ENCODE measurements at regions of chr11 and their contacts with region 1.

Region 1: DNA sequence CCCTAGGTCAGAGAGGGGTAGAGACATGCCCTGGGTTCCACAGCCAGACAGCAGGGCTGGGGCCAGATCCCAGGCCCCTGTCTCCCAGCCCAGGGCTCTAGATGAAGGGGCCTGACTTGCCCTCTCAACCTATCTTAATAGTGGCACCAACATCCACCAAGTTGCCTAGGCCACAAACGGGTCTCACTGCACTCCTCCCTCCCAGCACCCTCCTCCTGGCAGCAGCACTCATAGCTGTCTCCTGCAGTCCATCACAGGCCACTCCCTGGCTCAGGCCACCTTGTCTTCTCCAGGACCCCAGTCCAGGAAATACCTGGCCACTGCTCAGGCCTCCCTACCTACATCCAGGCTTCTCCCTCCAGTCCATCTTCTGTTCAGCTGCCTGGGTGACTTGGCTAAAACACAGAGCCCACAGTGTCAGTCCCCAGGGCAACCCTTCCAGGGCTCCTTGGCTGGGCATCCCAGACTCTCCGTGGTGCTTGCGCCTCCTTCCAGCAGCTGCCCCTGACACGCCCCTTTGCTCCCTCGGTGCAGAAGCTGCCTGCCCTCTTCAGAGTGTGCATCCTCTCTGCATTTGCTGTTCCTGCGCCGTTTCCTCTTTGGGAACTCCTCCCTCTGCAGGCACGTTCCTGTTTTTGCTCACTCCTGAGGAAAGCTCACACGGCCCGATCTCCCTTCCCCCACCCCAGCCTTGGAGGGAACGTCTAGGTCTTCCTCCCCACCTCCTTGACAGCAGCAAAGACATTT is 40.5 kb downstream of the LRRC32 start:
- H3K4me3 Mint-ChIP-seq: peak overlapping the region; percentile 66
- H3K27ac Mint-ChIP-seq: peak overlapping the region; percentile 98
- H3K4me1 Mint-ChIP-seq: peaks cover 54% of the 10 kb centered on the region
- H3K27me3 Mint-ChIP-seq: peaks cover 12% of the 10 kb centered on the region

Region 2: GRCh38 chr11:76588455-76589325 is 41.3 kb before region 1 on chr11:
- intact Hi-C with region 1: loop called (anchors 5 kb)
- H3K4me3 Mint-ChIP-seq: no peak overlapping the region
- H3K27ac Mint-ChIP-seq: peak overlapping the region; percentile 89
- H3K4me1 Mint-ChIP-seq: peaks cover 35% of the 10 kb centered on the region
- H3K27me3 Mint-ChIP-seq: peaks cover 14% of the 10 kb centered on the region

Region 3: DNA sequence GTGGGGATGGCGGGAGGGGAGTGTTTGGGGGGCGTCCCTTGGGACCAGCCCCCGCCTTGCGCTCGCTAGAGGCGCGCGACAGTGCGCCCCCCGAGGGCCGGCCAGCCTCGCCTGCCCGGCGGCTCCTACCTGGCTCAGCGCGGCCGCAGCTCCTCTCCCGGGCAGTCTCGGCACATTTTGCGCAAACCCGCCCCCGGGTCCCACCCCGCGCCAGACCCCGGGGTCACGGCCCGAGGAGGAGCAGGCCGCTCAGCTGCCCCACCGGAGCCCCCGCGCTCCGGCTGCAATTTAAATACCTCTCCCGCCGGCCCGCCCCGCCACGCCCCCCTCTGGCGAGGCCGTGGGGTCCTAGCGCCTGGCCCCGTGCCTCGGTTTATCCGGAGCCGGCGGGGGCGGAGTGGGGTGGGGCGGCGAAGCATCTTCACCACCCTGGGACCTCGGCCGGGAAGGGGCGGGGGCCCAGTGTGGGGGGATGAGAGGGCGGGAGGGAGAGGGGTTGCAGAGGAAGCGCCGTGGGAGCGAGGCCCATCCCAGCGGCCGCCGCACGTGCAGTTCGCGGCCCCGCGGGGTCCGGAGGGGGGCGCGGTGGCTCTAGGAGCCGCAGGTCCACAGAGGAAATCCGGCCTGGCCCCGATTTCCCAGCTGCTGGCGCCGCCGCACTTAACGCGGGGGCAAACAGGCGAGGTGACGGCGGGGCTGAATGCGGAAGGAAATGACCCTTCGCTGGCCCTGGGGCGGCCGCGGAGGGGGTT is 40.6 kb after region 1 on chr11 and contains the start of gene LRRC32:
- intact Hi-C with region 1: loop called (anchors 2 kb)
- H3K4me3 Mint-ChIP-seq: peak within 1 kb of the TSS; percentile 55
- H3K27ac Mint-ChIP-seq: no peak within 1 kb of the TSS
- H3K4me1 Mint-ChIP-seq: peaks cover 32% of the 10 kb centered on the region
- H3K27me3 Mint-ChIP-seq: peaks cover 87% of the 10 kb centered on the region